Lower leg skin (tissue), 4 donors: ENCODE measurements at regions of chr4 and their contacts with region 1.

Region 1: DNA sequence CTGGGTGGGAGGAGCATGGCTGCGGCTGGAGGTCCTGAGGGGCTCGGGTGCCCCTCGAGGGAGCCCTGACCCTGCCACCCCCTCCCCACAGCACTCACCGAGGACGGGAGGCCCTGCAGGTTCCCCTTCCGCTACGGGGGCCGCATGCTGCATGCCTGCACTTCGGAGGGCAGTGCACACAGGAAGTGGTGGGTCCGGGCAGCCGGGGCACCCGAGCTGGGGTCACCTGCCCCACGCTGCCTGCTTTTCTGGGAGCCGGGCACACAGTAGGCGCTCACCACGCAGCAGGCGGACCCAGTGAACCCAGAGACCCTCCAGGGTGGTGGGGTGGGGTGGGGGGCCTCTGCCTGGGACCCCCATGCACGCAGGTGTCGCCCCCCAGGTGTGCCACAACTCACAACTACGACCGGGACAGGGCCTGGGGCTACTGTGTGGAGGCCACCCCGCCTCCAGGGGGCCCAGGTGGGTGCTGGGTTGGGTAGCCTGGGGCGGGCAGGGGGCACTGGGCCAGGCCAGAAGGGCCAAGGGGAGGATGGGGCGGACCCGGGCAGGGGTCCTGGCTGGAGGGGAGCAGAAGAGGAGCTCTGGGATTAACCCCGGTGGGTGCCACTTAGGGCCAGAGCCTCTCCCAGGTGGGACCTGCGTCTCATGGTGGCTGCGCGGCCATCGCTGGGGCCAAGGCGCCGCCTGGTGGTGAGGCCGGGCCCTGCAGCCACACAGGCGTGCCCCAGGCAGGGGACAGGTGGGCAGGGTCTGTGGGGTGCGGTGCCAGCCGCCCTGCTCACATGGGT is 1.4 kb downstream of the HGFAC start:
- DNase-seq: no peak
- H3K4me3 ChIP-seq: no peak overlapping the region
- CTCF ChIP-seq: peak in 2 of 3 donors; percentile 23 to 97
- POLR2A ChIP-seq: no peak

Region 2: GRCh38 chr4:3106339-3107186 is 336.6 kb before region 1 on chr4:
- intact Hi-C with region 1: loop called (anchors 10 kb)
- DNase-seq: peak; percentile 88 to 98
- H3K4me3 ChIP-seq: no peak overlapping the region
- CTCF ChIP-seq: peak in 1 of 3 donors; percentile 52
- POLR2A ChIP-seq: no peak

Region 3: DNA sequence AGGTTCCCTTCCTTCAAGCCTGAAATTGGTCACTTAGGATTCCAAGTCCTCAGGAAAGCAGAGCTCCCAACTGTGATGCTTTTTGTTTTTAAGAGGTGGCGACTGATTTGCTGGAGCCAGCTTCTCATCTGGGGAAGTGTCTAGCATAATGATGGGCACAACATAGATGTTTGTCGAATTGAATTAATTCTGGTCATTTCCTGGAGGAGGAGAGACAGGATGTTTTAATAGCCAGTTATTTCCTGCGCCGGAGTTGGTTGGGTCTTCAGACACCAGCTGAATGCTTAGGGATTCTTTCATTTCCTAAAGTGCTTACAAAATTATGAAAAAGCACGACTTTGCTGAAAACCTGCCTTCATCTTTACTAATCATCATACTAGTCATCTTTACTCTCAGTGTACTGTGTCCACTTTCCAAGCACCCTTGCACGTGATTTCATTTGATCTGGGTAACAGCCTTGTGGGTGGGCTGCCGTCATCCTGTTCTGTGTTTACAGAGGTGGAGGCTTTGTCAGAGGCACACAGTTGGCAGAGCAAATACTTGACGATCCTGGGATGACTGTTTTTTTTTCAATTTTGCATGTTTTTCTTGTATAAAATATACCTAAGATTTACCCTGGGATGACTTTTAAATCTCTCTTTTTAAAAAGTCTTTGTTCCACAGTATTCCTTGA is 100.8 kb before region 1 on chr4:
- intact Hi-C with region 1: loop called (anchors 5 kb)
- DNase-seq: peak in 1 of 2 donors; percentile 11
- H3K4me3 ChIP-seq: no peak overlapping the region
- CTCF ChIP-seq: no peak
- POLR2A ChIP-seq: no peak